ENCODE measurements at regions of chr7 and their contacts with region 1.

Region 1: DNA sequence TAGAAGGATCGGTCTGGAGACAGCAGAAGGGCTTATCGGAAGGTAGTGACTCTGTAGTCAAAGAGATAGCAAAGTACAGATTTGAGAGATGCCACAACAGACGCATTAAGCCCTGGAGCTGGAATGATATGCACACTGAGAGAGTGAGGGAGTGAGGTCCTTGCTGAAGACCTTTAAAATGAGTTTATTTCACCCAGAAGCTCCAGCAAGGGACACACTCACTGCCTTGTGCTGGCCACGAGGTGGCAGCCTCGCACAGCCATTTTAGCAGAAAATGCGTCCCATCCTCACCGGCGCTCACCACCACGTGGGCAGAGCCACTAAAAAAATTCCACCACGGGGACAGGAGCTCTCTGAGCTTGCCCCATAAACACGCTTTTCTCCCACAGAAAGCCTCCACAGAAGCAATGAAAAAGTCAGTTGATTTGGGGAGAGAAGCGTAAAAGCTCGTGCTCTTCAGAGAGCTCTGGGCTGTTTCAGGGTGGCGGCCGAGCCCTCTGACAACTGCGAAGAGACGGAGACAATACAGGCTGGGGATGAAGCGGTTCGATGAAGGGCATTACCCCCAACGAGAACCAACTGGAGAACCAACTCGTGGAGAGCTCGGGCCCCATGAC is 163.0 kb upstream of the KLF14 start:
- DNase-seq: peak; percentile 53
- H3K4me3 Mint-ChIP-seq: peak overlapping the region; percentile 5
- H3K27ac Mint-ChIP-seq: peak overlapping the region; percentile 89
- H3K4me1 Mint-ChIP-seq: peaks cover 90% of the 10 kb centered on the region
- H3K27me3 Mint-ChIP-seq: no peaks in the 10 kb centered on the region

Region 2: GRCh38 chr7:130941322-130942210 is 44.6 kb after region 1 on chr7:
- intact Hi-C with region 1: loop called (anchors 10 kb)
- DNase-seq: no peak
- H3K4me3 Mint-ChIP-seq: peak overlapping the region; percentile 65
- H3K27ac Mint-ChIP-seq: peak overlapping the region; percentile 76
- H3K4me1 Mint-ChIP-seq: peaks cover 94% of the 10 kb centered on the region
- H3K27me3 Mint-ChIP-seq: no peaks in the 10 kb centered on the region

Region 3: GRCh38 chr7:131031099-131031868 is 134.3 kb after region 1 on chr7:
- intact Hi-C with region 1: loop called (anchors 1 kb)
- DNase-seq: no peak
- H3K4me3 Mint-ChIP-seq: peak overlapping the region; percentile 42
- H3K27ac Mint-ChIP-seq: peak overlapping the region; percentile 81
- H3K4me1 Mint-ChIP-seq: peaks cover 79% of the 10 kb centered on the region
- H3K27me3 Mint-ChIP-seq: no peaks in the 10 kb centered on the region

Region 4: GRCh38 chr7:131040467-131040932 is 143.5 kb after region 1 on chr7:
- intact Hi-C with region 1: loop called (anchors 1 kb)
- DNase-seq: peak; percentile 34
- H3K4me3 Mint-ChIP-seq: no peak overlapping the region
- H3K27ac Mint-ChIP-seq: no peak overlapping the region
- H3K4me1 Mint-ChIP-seq: peaks cover 24% of the 10 kb centered on the region
- H3K27me3 Mint-ChIP-seq: no peaks in the 10 kb centered on the region

Region 5: DNA sequence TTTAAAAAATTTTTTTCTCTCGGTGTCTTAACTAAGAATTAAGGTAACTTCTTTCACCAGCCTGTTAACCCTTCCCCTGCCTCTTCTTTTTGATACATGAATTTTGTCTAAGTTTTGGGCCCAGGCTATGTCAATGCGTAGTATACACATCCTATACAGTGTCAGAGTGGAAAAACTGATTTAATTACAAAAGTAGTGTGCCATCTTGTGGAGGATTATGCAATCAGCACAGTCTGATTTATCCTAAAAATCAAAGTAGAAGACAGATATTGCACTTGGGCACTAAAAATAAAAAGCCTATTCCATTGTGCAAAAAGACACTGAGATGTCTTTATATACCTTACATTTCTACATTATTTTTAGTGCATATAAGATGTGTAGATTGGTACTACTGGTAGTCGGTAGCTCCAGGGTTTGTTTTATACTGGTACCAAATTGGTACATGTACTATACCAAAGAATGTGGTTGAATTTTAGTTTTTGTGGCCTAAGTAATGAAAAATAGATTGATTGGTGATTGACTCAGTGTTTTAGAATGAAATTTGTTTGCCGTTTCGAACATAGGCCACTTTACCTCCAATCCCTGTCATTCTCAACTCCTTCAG is 527.3 kb after region 1 on chr7:
- intact Hi-C with region 1: loop called (anchors 10 kb)
- DNase-seq: no peak
- H3K4me3 Mint-ChIP-seq: no peak overlapping the region
- H3K27ac Mint-ChIP-seq: no peak overlapping the region
- H3K4me1 Mint-ChIP-seq: peaks cover 9% of the 10 kb centered on the region
- H3K27me3 Mint-ChIP-seq: no peaks in the 10 kb centered on the region

Region 6: DNA sequence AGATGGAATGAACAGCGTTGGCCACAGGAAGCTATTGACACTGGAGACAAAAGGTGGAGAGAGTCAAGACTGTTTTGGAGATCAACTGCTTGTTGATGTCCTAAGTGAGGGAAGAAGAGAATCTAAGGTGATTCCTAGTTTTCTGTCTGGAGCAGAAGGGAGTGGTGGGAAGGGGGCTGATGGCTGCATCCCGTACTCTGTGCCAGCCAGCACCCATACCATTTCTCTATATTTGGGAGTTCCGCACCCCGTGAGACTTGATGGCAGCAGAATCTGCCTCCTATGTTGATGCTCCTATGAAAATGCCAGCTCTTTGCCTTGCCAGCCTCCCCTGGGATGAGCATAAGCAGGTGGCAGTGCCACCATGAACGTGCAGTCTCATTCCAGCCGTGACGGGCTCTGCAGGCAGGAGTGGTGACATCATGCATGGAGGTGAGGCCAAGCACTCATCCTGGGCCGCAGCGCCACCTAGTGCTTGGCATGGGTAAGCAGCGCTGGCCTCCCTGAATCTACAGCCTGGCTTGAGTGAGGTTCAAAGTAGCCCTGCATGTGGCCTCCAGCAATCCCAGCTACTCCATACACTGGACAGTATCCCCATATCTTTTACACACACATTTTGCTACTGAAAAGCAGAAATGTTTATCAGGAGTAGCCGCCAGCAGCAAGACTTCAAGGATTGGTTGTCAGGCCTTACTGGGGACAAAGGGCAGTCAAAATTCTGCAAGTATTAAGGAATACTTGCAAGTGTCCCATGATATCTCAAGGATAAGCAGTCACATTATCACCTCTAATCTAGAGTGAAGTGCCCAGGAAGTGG is 616.4 kb after region 1 on chr7:
- intact Hi-C with region 1: loop called (anchors 2 kb)
- DNase-seq: peak; percentile 71
- H3K4me3 Mint-ChIP-seq: no peak overlapping the region
- H3K27ac Mint-ChIP-seq: peak overlapping the region; percentile 25
- H3K4me1 Mint-ChIP-seq: peaks cover 23% of the 10 kb centered on the region
- H3K27me3 Mint-ChIP-seq: peaks cover 12% of the 10 kb centered on the region